ENCODE measurements at regions of chr12 and their contacts with region 1.

Region 1: GRCh38 chr12:49336645-49337584 is at the start of gene C1QL4:
- DNase-seq: peak; percentile 90
- H3K4me3 ChIP-seq: peak within 1 kb of the TSS; percentile 56
- H3K27ac ChIP-seq: no peak within 1 kb of the TSS
- H3K4me1 ChIP-seq: peaks cover 11% of the 10 kb centered on the region
- H3K27me3 ChIP-seq: no peaks in the 10 kb centered on the region
- CTCF ChIP-seq: peak; percentile 97
- total RNA-seq, gene C1QL4: 0.41 and 1.0 TPM in 2 replicates

Region 2: DNA sequence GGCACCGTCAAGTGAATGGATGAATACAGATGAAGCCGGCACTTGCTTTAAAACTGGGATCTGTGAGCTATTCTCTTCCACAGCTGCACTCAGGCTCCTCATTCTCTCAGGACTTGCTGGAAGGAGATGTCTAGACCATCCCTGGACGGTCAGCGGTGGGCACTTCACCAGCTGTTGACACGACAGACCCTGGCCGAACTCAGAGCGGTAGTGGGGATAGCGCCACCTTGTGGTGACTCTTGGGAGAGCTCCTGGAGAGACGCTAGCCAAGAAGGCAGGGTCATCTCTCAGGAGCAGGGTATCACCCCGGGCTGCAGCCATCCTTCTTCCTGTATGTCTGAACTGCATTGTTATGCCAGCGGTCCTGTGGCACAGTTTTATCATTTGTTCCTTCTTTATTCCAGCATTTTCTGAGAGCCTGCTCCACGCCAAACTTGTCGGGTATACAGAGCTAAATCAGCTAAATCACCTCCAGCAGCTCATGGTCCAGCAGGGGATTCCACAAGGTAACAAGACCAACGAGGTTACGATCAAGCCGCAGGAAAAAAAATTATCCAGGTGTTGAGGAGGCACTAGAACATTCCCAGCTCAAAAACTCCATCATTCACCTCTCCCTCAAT is 348.8 kb before region 1 on chr12:
- CTCF ChIA-PET with region 1: no interaction called
- POLR2A ChIA-PET with region 1: no interaction called
- intact Hi-C with region 1: no loop called
- DNase-seq: peak; percentile 60
- H3K4me3 ChIP-seq: no peak overlapping the region
- H3K27ac ChIP-seq: no peak overlapping the region
- H3K4me1 ChIP-seq: peaks cover 17% of the 10 kb centered on the region
- H3K27me3 ChIP-seq: peaks cover 19% of the 10 kb centered on the region
- CTCF ChIP-seq: peak; percentile 97

Region 3: GRCh38 chr12:49288412-49288853 is 48.5 kb before region 1 on chr12:
- CTCF ChIA-PET with region 1: interaction called, 15 read pairs
- POLR2A ChIA-PET with region 1: no interaction called
- intact Hi-C with region 1: no loop called
- DNase-seq: peak; percentile 68
- H3K4me3 ChIP-seq: no peak overlapping the region
- H3K27ac ChIP-seq: no peak overlapping the region
- H3K4me1 ChIP-seq: peaks cover 7% of the 10 kb centered on the region
- H3K27me3 ChIP-seq: no peaks in the 10 kb centered on the region
- CTCF ChIP-seq: peak; percentile 93

Region 4: DNA sequence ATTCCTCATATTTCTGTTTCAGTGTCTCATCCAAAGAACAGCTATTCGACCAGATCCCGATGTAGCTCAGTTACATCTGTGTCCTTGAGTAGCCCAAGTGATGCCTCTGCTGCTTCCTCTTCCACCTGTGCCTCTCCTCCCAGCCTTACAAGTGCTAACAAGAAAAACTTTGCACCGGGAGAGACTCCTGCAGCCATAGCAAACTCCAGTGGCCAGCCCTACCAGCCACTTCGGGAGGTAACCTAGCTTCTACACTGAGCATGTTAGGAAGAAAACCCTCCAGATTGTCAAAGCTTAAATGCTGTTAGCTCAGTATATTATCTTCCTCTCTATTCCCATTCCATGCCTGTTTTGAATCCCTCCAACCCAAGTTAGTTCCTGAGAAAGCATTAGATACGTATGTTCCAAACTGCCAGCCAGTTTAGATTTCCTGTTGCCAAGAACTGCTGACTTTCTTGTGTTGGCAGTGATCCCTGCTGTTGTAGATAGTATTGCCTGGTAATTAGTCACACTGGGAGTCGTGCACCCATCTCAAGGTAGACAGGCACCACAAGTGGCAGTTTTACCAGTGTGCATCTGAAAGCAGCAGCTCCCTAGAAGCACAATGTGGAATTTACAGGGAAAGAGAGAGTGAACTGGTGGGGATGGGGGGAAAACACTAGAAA is 187.9 kb after region 1 on chr12:
- CTCF ChIA-PET with region 1: interaction called, 11 read pairs
- POLR2A ChIA-PET with region 1: no interaction called
- intact Hi-C with region 1: no loop called
- DNase-seq: no peak
- H3K4me3 ChIP-seq: no peak overlapping the region
- H3K27ac ChIP-seq: no peak overlapping the region
- H3K4me1 ChIP-seq: no peaks in the 10 kb centered on the region
- H3K27me3 ChIP-seq: no peaks in the 10 kb centered on the region
- CTCF ChIP-seq: no peak